ENCODE measurements at regions of chr3 and their contacts with region 1.

Region 1: DNA sequence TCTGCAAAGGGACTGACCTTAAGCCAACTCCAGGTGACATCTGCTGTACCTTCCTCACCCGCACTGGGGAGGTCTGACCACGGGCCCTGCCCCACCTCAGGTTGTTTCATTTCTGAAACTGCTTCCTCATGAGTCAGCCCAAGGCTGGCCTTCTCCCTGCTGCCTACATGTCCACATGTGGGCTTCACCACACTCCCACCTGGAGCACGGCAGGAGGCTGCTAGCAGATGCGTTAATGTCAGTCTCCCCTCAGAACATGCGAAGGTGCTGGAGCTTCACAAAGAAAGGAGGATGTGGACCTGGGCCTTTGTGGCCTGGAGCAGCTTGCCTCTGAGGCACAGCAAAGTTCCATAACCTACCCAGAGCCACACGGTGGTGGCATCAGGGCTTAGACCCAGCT is 69.4 kb upstream of the PLXNA1 start:
- DNase-seq: no peak
- H3K4me3 ChIP-seq: no peak overlapping the region
- H3K27me3 ChIP-seq: no peaks in the 10 kb centered on the region
- CTCF ChIP-seq: no peak

Region 2: DNA sequence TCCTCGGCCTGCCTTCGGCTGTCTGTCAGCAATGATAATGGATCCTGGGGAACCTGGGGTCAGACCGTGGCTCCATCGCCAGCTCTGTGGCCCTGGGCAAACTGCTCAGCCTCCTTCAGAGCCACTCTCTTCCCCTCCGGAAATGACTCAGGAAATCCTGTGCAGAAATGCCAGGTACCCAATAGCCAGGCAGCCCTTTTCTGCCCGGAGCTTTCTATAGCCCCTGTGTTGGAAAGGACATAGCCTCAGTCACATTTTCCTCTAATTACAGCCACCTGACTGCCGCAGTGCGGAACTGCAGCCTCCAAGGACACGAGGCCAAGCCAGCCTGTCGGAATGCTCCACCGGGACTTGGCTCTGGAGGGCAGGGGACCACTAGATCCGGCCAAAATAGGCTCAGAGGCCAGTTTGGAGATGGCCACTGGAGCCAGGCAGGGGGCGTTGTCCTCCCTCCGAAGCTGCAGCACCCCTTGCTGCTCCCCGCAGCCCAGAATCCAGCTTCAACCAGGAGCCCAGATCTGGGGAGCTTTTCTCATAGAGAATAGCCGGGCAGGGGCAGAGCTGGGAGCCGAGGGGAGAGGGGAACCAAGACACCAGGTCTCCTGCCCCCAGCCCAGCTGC is 426.3 kb before region 1 on chr3:
- CTCF ChIA-PET with region 1: no interaction called
- POLR2A ChIA-PET with region 1: no interaction called
- DNase-seq: no peak
- H3K4me3 ChIP-seq: no peak overlapping the region
- H3K27me3 ChIP-seq: peaks cover 5% of the 10 kb centered on the region
- CTCF ChIP-seq: no peak

Region 3: DNA sequence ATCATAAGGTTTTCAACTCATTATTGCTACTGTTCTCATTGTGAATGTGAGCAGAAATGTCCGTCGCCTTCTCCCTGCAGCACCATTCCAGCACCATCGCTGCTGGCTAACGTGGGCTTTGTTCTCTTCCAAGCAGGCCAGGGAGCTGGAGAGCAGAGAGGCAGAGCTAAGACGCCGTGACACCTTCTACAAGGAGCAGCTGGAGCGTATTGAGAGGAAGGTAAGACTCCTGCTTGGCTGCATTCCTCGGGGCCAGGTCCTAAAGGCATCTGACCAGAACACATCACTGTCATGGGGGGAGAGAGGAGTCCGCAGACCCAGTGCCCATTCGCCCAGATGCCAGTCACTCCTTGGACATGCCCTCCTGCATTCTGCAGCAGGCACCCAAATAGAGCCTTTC is 61.0 kb before region 1 on chr3:
- CTCF ChIA-PET with region 1: no interaction called
- POLR2A ChIA-PET with region 1: interaction called, 15 read pairs
- DNase-seq: no peak
- H3K4me3 ChIP-seq: no peak overlapping the region
- H3K27me3 ChIP-seq: no peaks in the 10 kb centered on the region
- CTCF ChIP-seq: no peak

Region 4: DNA sequence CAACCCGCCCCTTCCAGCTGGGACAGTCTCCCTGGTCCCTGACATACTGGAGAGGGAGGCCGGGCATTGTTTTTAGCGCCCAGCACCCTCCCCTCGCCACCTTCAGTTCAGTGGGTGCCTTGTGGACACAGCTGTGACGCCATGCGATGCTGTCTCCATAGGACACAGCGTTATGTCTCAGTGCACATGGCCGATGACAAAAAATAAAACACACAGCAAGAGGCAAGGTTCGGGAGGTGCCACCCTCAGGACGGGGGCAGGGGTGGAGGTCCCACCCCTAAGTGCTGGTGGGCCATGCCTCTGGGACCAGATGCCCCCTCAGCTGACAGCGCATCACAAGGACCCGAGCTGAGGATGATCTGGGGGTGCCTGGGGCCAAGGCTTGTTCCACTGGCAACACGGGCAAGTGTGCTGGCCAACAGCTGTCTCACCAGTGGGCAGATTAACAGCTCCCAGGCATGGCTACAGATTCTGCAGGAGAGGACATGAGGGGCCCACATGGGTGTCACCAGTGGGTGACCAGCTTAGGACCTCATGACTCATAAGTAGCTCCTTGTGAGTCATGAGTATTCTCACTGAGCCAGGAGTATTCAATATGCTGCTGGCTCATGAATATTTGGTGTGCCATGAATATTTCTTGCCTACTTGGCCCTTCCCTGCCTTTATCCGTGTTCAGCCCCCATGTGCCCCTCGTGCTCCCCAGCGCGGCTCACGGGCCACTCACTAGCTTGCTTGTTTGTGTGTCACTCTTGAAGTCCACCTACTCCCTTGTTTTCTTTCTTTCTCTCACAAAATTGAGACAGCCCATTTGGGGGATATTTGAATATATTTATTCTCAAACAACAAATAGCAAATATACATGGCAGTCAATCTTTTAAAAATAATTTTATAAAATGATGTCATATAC is 151.2 kb after region 1 on chr3:
- CTCF ChIA-PET with region 1: no interaction called
- POLR2A ChIA-PET with region 1: no interaction called
- DNase-seq: no peak
- H3K4me3 ChIP-seq: no peak overlapping the region
- H3K27me3 ChIP-seq: peaks cover 14% of the 10 kb centered on the region
- CTCF ChIP-seq: no peak

Region 5: DNA sequence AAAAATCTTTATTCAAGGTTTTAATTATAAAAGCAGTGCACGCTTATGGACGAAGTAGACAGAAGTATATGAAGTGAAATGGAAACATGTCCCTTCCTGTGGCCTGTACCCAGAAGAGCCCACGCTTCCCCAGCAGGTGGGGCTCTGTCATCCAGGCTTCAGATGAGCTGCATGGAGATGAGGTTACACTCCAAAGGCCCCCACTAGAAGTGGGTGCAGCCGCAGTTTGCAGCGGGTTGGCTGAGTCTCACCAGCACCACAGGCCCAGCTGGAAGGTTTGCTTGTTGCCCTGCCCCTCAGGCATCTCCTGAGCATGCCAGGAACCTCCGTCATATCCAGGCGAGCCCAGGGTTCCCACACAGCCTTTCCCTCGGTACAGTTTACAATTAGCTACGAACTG is 341.2 kb after region 1 on chr3:
- CTCF ChIA-PET with region 1: no interaction called
- POLR2A ChIA-PET with region 1: no interaction called
- DNase-seq: no peak
- H3K4me3 ChIP-seq: no peak overlapping the region
- H3K27me3 ChIP-seq: peaks cover 2% of the 10 kb centered on the region; the same call in 1 of the 2 replicates
- CTCF ChIP-seq: peak; percentile 34; the same call in 1 of the 2 replicates

Measured in BJ (cell line).